AG04450 (cell line): ENCODE measurements at regions of chr6 and their contacts with region 1.

Region 1: DNA sequence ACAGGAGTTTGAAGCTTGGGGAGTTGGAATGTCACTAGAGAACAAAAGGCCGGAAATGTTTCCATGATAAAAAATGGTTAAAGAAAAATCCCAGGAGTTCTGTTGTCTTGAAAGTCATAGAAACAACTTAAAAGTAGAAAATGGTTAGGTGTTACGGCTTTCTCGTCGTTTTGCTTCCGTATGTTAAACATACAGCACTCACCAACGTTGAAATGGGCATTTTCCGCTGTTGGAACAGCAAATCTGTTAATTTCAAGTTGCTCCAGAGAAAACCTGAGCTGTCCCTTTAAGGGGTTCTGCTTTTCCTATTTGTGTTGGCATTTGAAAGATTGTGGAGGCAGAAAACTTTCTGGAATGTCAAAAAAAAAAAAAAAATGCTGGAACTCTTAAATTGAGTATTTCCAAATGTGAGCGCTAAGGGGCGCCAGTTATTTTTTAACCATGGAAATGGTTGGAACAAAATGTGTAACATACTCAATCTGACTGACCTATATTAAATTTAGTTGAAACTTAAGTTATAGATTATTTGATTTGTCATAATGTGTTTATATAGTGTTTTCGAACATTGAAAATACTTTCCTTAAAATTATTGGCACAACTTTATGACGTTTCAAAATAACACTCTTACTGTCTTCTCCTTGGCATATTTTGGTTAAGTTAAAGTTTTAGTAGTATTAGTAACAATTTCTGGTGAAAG is 2.2 kb downstream of the QKI start:
- DNase-seq: peak; percentile 72
- H3K4me3 ChIP-seq: peak overlapping the region; percentile 91
- H3K27ac ChIP-seq: peak overlapping the region; percentile 84
- H3K27me3 ChIP-seq: no peaks in the 10 kb centered on the region
- CTCF ChIP-seq: peak; percentile 61

Region 2: GRCh38 chr6:163427498-163428254 is 11.0 kb after region 1 on chr6:
- CTCF ChIA-PET with region 1: interaction called, 21 read pairs
- POLR2A ChIA-PET with region 1: no interaction called
- DNase-seq: peak; percentile 44
- H3K4me3 ChIP-seq: no peak overlapping the region
- H3K27ac ChIP-seq: no peak overlapping the region
- H3K27me3 ChIP-seq: no peaks in the 10 kb centered on the region
- CTCF ChIP-seq: peak; percentile 48